Mammary epithelial cell (primary cell): ENCODE measurements at regions of chr5 and their contacts with region 1.

Region 1: GRCh38 chr5:149205625-149206523 is 64.6 kb downstream of the ABLIM3 start:
- DNase-seq: no peak
- H3K4me3 ChIP-seq: no peak overlapping the region
- H3K27ac ChIP-seq: no peak overlapping the region
- H3K4me1 ChIP-seq: peaks cover 33% of the 10 kb centered on the region
- H3K27me3 ChIP-seq: no peaks in the 10 kb centered on the region
- CTCF ChIP-seq: no peak

Region 2: DNA sequence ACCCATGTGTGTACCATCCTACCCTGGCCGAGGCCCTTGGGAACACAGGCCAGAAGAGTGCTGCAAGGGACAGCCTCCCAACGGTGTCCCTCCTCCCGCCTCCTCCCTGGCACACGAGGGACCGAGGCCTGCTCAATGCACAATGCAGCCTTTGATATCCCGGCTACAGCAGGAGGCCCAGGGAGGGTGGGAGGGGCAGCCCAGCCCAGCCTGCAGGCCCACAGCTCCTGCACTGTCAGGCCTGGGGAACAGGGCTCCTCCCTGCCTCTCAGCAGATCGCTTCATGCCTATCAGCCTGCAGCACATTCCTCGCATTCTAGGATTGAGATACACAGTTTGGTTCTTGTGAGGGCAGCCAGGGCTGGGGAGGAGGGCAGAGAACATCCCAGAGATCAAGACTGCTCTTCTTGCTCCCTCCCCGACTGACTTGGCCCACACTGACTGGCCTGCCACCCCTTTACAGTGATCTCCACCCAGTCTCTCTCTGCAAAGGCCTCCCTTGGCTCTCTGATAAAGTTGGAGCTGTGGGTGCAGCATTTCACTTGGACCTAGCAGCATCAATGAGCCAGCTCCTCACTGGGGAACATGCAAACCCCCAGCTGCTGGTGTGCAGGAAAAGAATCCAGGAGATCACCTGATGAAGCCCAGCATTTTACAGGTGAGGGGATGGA is 142.7 kb before region 1 on chr5 and contains the start of gene SH3TC2:
- CTCF ChIA-PET with region 1: no interaction called
- dilution Hi-C with region 1: no loop called
- in situ Hi-C with region 1: no loop called
- intact Hi-C with region 1: no loop called
- DNase-seq: peak; percentile 87
- H3K4me3 ChIP-seq: peak within 1 kb of the TSS in 2 of 3 experiments; percentile 19 to 41
- H3K27ac ChIP-seq: peak within 1 kb of the TSS; percentile 84
- H3K4me1 ChIP-seq: peaks cover 53% of the 10 kb centered on the region
- H3K27me3 ChIP-seq: no peaks in the 10 kb centered on the region
- CTCF ChIP-seq: no peak
- total RNA-seq, gene SH3TC2: 42.0 to 57.8 TPM

Region 3: GRCh38 chr5:149133795-149134780 is 71.8 kb before region 1 on chr5:
- CTCF ChIA-PET with region 1: no interaction called
- dilution Hi-C with region 1: loop called (anchors 5 kb)
- in situ Hi-C with region 1: no loop called
- intact Hi-C with region 1: no loop called
- DNase-seq: peak; percentile 89
- H3K4me3 ChIP-seq: no peak overlapping the region
- H3K27ac ChIP-seq: peak overlapping the region; percentile 78
- H3K4me1 ChIP-seq: peaks cover 56% of the 10 kb centered on the region
- H3K27me3 ChIP-seq: no peaks in the 10 kb centered on the region
- CTCF ChIP-seq: no peak